MCF 10A (cell line): ENCODE measurements at regions of chr2 and their contacts with region 1.

Region 1: DNA sequence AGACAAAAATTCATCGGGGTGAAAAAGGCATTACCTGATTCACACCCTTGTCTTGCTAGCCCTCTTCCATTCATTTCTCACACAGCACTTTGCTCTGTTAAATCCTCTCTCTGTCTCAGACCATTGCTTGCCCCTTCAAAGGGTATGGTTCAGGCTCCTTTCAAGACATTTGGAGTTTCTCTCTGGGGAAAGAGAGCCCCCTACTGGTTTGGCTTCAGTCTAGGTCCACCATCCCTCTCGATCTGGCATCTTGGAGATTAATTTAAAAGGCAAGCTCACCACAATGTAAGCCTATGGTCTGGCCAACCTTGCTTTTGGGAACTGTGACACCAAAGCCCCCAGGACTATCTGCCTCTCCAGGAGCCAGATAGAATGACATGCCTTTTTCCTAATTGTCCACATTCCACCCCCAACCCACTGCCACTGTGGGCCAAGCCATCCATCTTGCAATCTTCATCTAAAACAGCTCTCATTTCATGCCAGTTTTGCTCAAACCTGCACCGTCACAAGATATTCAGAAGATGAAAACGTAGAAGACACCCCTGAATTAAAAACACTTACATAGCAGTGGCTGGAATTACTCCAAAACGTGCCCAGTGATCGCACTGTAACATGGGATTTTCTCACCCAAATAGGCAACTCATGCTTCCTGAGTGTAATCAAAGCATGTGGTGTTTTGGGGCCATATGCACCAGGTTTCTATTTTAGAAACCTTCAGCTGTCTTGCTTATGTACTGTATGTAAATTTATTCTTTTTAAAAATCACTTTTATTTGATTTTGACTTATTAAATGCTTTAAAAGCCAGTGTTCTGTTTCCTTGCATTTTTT is 93.9 kb downstream of the FARSB start:
- DNase-seq: peak; percentile 78
- H3K4me3 Mint-ChIP-seq: no peak overlapping the region
- H3K27ac Mint-ChIP-seq: no peak overlapping the region
- H3K4me1 Mint-ChIP-seq: peaks cover 7% of the 10 kb centered on the region
- H3K27me3 Mint-ChIP-seq: no peaks in the 10 kb centered on the region
- CTCF ChIP-seq: peak; percentile 72

Region 2: DNA sequence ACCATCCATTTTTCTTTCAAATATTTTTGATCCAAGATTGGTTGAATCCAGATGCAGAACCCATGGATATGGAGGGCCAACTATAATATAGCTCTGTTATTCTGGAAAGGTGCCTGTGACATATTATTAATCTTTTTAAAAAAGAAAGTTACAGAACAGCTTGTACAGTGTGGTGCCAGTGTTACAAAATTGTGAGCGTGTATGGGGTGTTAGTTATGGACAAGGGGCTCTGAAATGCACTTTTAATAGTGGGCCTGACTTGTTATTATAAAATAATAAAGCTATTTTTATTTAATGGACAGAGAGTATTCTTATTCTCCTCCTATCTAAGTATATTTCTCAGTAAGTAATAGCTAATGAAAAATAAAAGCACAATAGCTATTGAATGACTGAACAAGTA is 17.4 kb before region 1 on chr2:
- CTCF ChIA-PET with region 1: interaction called, 10 read pairs
- POLR2A ChIA-PET with region 1: no interaction called
- intact Hi-C with region 1: no loop called
- DNase-seq: no peak
- H3K4me3 Mint-ChIP-seq: no peak overlapping the region
- H3K27ac Mint-ChIP-seq: no peak overlapping the region
- H3K4me1 Mint-ChIP-seq: peaks cover 5% of the 10 kb centered on the region
- H3K27me3 Mint-ChIP-seq: no peaks in the 10 kb centered on the region
- CTCF ChIP-seq: no peak